Heart left ventricle (tissue), 16 donors: ENCODE measurements at regions of chr18 and their contacts with region 1.

Region 1: GRCh38 chr18:30870466-30870865 is 172.1 kb downstream of the DSC3 start:
- DNase-seq: no peak
- ATAC-seq: peak; percentile 71 to 82 (median 82)
- H3K4me3 ChIP-seq: no peak overlapping the region
- H3K27ac ChIP-seq: peak overlapping the region in 5 of 12 donors; percentile 21 to 45 (median 32)
- H3K4me1 ChIP-seq: peaks cover 0 to 6% (median 0%) of the 10 kb centered on the region in 12 donors
- H3K27me3 ChIP-seq: no peaks in the 10 kb centered on the region
- CTCF ChIP-seq: no peak
- POLR2A ChIP-seq: no peak

Region 2: GRCh38 chr18:30852980-30853379 is 17.5 kb before region 1 on chr18:
- intact Hi-C with region 1: no loop called
- DNase-seq: no peak
- ATAC-seq: no peak
- H3K4me3 ChIP-seq: no peak overlapping the region
- H3K27ac ChIP-seq: no peak overlapping the region
- H3K4me1 ChIP-seq: no peaks in the 10 kb centered on the region
- H3K27me3 ChIP-seq: no peaks in the 10 kb centered on the region
- CTCF ChIP-seq: no peak
- POLR2A ChIP-seq: no peak

Region 3: DNA sequence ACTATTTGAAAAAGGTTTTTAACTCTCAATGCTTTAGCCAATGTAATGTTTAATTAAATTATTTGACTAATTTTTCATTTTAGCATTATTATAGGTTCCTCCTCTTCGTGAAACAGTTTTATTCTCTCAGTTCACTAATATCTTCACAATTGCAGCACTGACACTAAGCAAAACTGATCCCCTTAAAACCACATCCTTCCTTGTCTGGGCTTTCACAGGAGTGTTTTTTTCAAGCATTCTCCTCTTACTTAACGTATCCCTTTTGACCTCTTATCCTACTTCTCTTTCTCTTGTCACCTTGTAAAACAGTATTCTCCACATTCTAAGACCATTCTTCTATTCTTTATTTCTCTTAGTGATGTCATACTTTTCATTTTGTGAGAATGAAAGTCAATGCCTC is 59.3 kb after region 1 on chr18:
- intact Hi-C with region 1: loop called in 1 of 10 experiments (anchors 10 kb)
- DNase-seq: no peak
- ATAC-seq: no peak
- H3K4me3 ChIP-seq: no peak overlapping the region
- H3K27ac ChIP-seq: no peak overlapping the region
- H3K4me1 ChIP-seq: no peaks in the 10 kb centered on the region
- H3K27me3 ChIP-seq: no peaks in the 10 kb centered on the region
- CTCF ChIP-seq: no peak
- POLR2A ChIP-seq: no peak